ENCODE measurements at regions of chr15 and their contacts with region 1.

Region 1: DNA sequence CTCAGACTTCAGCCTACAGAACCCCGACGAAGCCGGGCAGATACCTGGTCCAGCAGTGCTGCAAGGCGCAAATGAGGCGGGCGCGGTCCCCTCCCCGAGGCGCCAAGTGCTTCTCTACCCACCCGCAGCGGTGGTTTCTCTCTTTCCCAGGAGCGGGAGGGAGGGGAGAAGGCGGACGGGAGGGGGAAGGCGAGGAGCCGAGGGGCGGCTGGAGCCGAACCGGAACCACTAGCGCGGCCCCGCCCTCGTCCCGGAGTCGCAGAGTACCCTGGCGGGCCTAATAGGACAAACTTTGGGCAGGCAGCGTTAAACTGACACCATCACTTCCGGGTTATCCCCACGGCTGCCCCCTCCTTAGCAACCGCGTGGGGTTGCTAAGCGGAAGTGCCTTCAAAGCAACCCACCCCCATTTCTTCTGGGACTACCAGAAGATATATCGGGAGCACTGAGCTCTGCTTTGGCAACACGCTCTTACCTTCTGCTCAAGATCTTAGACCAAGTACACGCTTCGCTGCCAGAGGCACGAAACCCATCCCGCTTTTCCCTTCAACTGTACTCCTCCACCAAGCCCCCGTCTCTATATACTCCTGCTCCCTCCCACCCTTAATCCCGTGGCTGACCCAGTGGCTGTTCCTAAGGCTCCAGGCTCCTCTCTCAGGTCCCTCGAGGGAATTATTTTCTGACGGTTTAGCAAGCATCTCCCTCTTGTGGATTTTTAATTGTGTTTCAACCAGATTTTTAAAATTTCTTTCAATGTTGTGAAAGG is at the start of gene CSNK1G1:
- DNase-seq: peak; percentile 97
- H3K4me3 ChIP-seq: peak within 1 kb of the TSS; percentile 72 to 97 (median 91)
- H3K27ac ChIP-seq: peak within 1 kb of the TSS; percentile 80 to 88 (median 83)
- H3K4me1 ChIP-seq: peaks cover 16 to 27% (median 21%) of the 10 kb centered on the region in 4 donors
- H3K27me3 ChIP-seq: no peaks in the 10 kb centered on the region
- CTCF ChIP-seq: peak; percentile 23 to 34 (median 27)
- EP300 ChIP-seq: no peak
- POLR2A ChIP-seq: no peak
- total RNA-seq, gene CSNK1G1: 9.1 to 11.2 (median 10.1) TPM

Region 2: GRCh38 chr15:64162870-64163658 is 193.1 kb before region 1 on chr15 and contains the start of gene PPIB:
- intact Hi-C with region 1: loop called (anchors 5 kb)
- DNase-seq: peak; percentile 99
- H3K4me3 ChIP-seq: peak within 1 kb of the TSS; percentile 75 to 84 (median 82)
- H3K27ac ChIP-seq: peak within 1 kb of the TSS; percentile 80 to 90 (median 86)
- H3K4me1 ChIP-seq: peaks cover 46 to 53% (median 49%) of the 10 kb centered on the region in 4 donors
- H3K27me3 ChIP-seq: no peaks in the 10 kb centered on the region
- CTCF ChIP-seq: peak in 2 of 3 experiments; percentile 52 to 57
- EP300 ChIP-seq: no peak
- POLR2A ChIP-seq: peak; percentile 80
- total RNA-seq, gene PPIB: 110 to 227 (median 214) TPM

Region 3: DNA sequence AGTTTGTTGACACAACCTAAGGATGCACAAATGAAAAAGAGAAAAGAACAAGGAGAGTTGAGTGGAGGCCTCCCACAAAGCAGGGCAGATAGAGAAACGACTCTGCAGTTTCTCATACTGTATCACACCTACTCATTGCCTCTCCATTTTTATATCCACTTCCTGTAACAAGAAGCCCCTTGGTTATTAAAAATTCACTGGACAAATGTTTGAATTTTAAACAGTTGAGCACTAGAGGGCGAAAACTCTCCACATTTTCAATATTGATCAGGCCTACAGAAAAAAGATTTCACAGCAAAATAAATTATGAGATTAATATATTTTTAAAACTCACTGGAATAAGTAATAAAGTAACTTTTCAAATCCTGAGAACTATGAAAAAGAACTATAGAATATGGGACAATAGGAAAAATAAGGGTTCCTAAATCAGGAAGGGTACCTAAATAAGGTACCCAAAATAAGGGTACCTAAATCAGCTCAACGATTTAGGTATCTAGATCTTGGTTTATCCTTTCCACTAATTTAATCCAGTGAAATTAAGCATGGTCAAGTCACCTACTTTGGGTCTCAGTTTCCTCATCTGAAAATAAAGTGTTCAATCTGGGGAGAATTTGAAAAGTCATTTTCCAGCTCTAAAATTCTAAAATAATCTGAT is 146.3 kb before region 1 on chr15:
- intact Hi-C with region 1: loop called (anchors 10 kb)
- DNase-seq: no peak
- H3K4me3 ChIP-seq: no peak overlapping the region
- H3K27ac ChIP-seq: no peak overlapping the region
- H3K4me1 ChIP-seq: no peaks in the 10 kb centered on the region
- H3K27me3 ChIP-seq: no peaks in the 10 kb centered on the region
- CTCF ChIP-seq: peak; percentile 36 to 39 (median 37)
- EP300 ChIP-seq: no peak
- POLR2A ChIP-seq: no peak

Region 4: GRCh38 chr15:65133548-65134200 is 777.5 kb after region 1 on chr15 and contains the start of gene PDCD7:
- intact Hi-C with region 1: no loop called
- DNase-seq: peak; percentile 95
- H3K4me3 ChIP-seq: peak within 1 kb of the TSS; percentile 95 to 98 (median 97)
- H3K27ac ChIP-seq: peak within 1 kb of the TSS; percentile 91 to 95 (median 94)
- H3K4me1 ChIP-seq: peaks cover 23 to 38% (median 36%) of the 10 kb centered on the region in 4 donors
- H3K27me3 ChIP-seq: no peaks in the 10 kb centered on the region
- CTCF ChIP-seq: peak in 1 of 3 experiments; percentile 4
- EP300 ChIP-seq: no peak
- POLR2A ChIP-seq: peak; percentile 21
- total RNA-seq, gene PDCD7: 24.2 to 33.4 (median 25.5) TPM